ENCODE measurements at regions of chr20 and their contacts with region 1.

Region 1: DNA sequence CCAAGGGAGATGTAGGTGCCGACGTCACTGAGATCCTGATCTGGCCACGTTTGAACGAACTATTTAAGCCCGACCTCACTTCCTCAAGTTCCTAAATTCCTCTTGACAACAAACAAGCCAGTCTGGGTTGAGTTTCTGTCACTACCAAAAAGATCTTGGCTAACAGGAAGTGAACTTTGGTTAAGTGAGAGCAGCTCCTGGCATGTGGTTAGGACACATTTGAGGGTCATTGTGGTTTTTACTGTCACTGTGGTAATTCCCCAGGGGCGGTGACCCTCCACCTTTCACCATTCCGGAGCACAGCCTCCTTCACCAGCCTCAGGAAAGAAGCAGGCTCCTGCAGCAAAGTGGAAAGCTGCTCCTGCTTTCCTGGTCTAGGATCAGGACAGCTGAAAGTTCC is 43.1 kb upstream of the ZNF831 start:
- DNase-seq: peak; percentile 22 to 76
- ATAC-seq: peak; percentile 52 to 79 (median 59)
- H3K4me3 ChIP-seq: no peak overlapping the region
- H3K4me3 Mint-ChIP-seq: peak overlapping the region; percentile 81
- H3K27ac ChIP-seq: peak overlapping the region; percentile 82
- H3K27ac Mint-ChIP-seq: peak overlapping the region; percentile 91
- H3K4me1 ChIP-seq: peaks cover 66% of the 10 kb centered on the region
- H3K4me1 Mint-ChIP-seq: peaks cover 68% of the 10 kb centered on the region in 2 donors
- H3K27me3 ChIP-seq: no peaks in the 10 kb centered on the region
- H3K27me3 Mint-ChIP-seq: no peaks in the 10 kb centered on the region
- CTCF ChIP-seq: no peak

Region 2: GRCh38 chr20:59102841-59103299 is 17.6 kb before region 1 on chr20:
- intact Hi-C with region 1: loop called (anchors 1 kb)
- DNase-seq: no peak
- ATAC-seq: no peak
- H3K4me3 ChIP-seq: no peak overlapping the region
- H3K4me3 Mint-ChIP-seq: no peak overlapping the region
- H3K27ac ChIP-seq: no peak overlapping the region
- H3K27ac Mint-ChIP-seq: no peak overlapping the region
- H3K4me1 ChIP-seq: peaks cover 3% of the 10 kb centered on the region
- H3K4me1 Mint-ChIP-seq: peaks cover 11% of the 10 kb centered on the region in 2 donors
- H3K27me3 ChIP-seq: no peaks in the 10 kb centered on the region
- H3K27me3 Mint-ChIP-seq: peaks cover 7 to 16% of the 10 kb centered on the region in 2 donors
- CTCF ChIP-seq: no peak

Region 3: DNA sequence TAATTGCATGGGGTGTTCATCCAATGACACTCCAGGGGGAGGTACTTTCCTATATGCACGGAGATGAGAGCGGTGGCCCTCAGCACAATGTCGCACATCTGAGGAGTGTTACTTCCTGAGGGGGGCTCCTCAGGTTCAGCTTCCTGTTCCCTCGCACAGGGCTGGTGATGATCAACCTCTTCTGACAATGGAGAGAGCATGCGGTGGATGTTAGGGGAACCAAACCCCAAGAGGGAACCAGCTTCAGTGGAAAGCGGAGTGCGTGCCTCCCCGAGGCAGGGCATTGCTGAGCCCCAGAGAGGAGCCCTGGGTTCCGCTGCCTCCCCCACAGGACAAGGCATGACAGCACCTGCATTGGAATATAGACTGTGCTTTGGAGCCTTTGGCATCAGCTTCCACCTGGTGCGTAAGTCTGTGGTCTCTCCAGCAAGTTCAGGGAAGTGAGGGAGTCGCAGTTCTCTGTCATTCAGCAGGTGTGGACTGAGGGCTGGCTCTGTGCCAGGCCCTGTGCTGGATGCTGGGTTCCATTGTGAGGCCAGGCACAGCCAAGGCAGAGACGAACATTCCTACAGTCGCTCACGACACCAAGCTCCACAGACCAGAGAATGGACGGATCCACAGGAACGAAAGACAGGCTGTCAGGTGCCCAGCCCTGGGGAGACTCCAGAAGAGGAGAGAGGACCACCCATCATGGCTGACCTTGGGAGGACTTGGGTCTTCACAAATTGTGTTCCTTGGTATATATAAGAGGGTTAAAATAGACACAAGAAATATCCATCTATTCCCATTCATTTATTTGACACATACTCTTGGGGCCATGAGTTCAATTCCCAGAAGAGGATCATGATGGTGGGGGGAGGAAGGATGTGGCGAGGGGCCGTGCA is 39.2 kb after region 1 on chr20:
- intact Hi-C with region 1: loop called (anchors 5 kb)
- DNase-seq: peak; percentile 75 to 94
- ATAC-seq: peak; percentile 88 to 96 (median 95)
- H3K4me3 ChIP-seq: peak overlapping the region; percentile 46
- H3K4me3 Mint-ChIP-seq: peak overlapping the region; percentile 94
- H3K27ac ChIP-seq: peak overlapping the region; percentile 100
- H3K27ac Mint-ChIP-seq: peak overlapping the region; percentile 100
- H3K4me1 ChIP-seq: peaks cover 43% of the 10 kb centered on the region
- H3K4me1 Mint-ChIP-seq: peaks cover 64 to 76% of the 10 kb centered on the region in 2 donors
- H3K27me3 ChIP-seq: no peaks in the 10 kb centered on the region
- H3K27me3 Mint-ChIP-seq: peaks cover 2 to 6% of the 10 kb centered on the region in 2 donors
- CTCF ChIP-seq: no peak

Region 4: DNA sequence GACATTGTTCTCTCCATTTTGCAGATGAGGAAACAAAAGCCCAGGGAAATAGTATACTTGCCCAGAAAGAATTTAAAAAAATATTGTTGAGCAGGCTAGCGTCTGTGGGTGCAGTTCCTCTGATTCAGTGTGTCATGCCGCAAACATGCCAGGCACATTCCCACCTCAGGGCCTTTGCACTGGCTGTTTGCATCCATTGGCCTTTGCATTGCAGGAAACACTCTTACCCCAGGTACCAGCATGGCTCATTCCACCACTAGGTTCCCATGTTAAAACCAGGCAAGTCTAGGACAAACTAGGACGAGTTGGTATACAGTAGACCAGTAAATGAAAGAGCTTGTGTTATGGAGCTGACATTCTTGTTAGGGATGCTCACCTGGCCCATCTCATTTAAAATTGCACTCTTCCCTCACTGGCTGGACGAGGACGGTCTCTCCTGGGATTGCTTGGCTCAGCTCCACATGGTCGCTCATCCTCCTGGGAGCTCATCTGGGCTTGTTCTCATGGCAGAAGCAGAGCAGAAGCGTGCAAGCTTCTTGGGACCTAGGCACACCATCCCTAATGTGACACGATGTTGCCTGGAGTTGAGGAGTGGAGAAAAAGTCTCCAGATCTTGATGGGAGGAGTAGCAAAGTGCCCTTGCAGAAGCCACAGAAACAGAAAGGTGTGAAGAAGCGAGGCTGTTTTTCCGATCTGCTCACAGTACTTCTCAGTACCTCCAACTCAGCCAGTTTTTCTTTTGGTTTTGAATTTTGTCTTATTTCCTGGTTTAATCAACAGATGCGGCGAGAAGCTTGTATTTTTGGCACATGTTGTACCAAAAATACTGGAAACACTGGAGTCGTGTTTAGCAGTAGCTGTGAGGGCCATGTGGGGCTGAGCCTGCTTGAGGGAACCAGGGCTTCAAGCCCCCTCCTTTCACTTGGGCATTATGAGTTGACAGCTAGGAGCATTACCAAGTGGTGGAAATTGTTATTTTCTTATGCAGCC is 57.1 kb after region 1 on chr20:
- intact Hi-C with region 1: loop called (anchors 2 kb)
- DNase-seq: peak in 1 of 2 donors; percentile 73
- ATAC-seq: peak; percentile 79 to 85 (median 80)
- H3K4me3 ChIP-seq: peak overlapping the region; percentile 8
- H3K4me3 Mint-ChIP-seq: peak overlapping the region; percentile 95
- H3K27ac ChIP-seq: peak overlapping the region; percentile 97
- H3K27ac Mint-ChIP-seq: peak overlapping the region; percentile 96 to 98
- H3K4me1 ChIP-seq: peaks cover 64% of the 10 kb centered on the region
- H3K4me1 Mint-ChIP-seq: peaks cover 87 to 94% of the 10 kb centered on the region in 2 donors
- H3K27me3 ChIP-seq: no peaks in the 10 kb centered on the region
- H3K27me3 Mint-ChIP-seq: no peaks in the 10 kb centered on the region
- CTCF ChIP-seq: no peak

Measured in natural killer cell (primary cell).